H1 (cell line): ENCODE measurements at regions of chr12 and their contacts with region 1.

Region 1: DNA sequence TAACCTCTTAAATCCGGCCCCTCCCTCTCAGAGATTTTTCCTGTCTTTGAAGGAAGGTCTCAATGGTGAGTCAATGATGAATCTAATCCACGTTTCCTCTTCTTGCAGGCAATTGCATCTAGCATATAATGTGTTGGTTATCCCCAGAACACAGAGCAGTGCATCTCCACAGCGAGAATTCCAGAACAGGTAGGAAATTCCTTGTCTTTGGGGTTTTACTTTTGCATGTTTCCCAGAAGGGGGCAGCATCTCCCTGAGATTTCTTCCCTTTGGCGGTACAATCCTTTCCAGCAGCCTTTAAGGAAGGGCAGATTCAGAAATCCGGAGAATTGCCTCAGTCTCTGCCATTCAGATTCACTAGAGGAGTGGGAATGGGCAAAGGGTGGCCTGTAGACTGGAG is 128.0 kb downstream of the KCNA5 start:
- DNase-seq: peak; percentile 23 to 61
- H3K4me3 ChIP-seq: no peak overlapping the region
- H3K27ac ChIP-seq: no peak overlapping the region
- H3K4me1 ChIP-seq: peaks cover 0 to 4% (median 0%) of the 10 kb centered on the region in 4 experiments; a peak in 3 of 7 replicates
- H3K27me3 ChIP-seq: 0 out of 7 replicates have a peak, but pooled peaks cover 0 to 2% (median 0%) of the 10 kb centered on the region in 4 experiments
- CTCF ChIP-seq: peak in 2 of 3 experiments; percentile 74 to 83; a peak in 3 of 4 replicates
- EP300 ChIP-seq: no peak
- POLR2A ChIP-seq: no peak
- RAD21 ChIP-seq: peak; percentile 86 to 91

Region 2: DNA sequence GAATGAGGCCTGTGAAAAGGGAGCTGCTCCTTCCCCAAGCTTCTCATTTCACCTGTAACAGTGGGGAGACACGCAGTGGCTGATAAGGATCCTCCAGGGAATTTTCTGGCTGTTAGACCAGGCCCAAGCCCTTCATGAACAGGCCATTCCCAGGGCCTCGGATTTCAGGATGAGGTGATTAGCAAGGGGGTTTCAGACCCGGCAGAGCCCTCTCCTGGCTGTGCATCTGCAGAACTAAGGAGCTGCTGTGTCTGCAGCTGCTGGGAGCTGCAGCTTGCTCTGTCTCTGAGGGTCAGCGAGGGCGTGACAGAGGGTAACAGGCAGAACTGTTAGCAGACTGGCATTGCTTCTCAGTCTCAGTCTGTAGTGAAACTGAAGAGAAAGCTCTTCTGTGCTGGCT is 17.6 kb before region 1 on chr12:
- CTCF ChIA-PET with region 1: interaction called, 10 read pairs
- POLR2A ChIA-PET with region 1: no interaction called
- DNase-seq: peak; percentile 34 to 55
- H3K4me3 ChIP-seq: no peak overlapping the region
- H3K27ac ChIP-seq: no peak overlapping the region
- H3K4me1 ChIP-seq: peaks cover 0 to 4% (median 1%) of the 10 kb centered on the region in 4 experiments; a peak in 2 of 7 replicates
- H3K27me3 ChIP-seq: no peaks in the 10 kb centered on the region
- CTCF ChIP-seq: peak; percentile 13 to 52 (median 39); a peak in 3 of 4 replicates
- EP300 ChIP-seq: no peak
- POLR2A ChIP-seq: no peak
- RAD21 ChIP-seq: peak; percentile 44 to 53

Region 3: DNA sequence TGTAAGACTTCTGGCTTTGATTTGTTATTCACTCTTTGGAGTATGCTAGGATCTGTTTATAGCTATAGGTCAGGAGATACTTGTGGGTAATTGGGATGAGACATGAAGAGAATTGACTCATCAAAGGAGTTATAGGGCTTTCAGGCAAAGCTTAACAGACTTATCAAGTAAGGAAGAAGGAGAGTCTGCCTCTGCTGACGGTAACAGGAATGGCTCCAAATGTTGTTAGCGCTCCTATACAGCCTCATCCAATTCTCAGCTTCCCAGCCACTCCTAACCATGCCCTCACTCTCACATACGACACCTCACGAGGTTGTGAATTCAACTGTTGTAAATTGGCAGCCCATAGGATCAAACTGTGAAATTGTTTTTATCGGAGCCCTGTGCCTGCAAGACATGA is 12.5 kb after region 1 on chr12:
- CTCF ChIA-PET with region 1: interaction called, 28 read pairs
- POLR2A ChIA-PET with region 1: interaction called, 3 read pairs
- DNase-seq: no peak
- H3K4me3 ChIP-seq: no peak overlapping the region
- H3K27ac ChIP-seq: no peak overlapping the region
- H3K4me1 ChIP-seq: no peaks in the 10 kb centered on the region
- H3K27me3 ChIP-seq: no peaks in the 10 kb centered on the region
- CTCF ChIP-seq: peak in 1 of 3 experiments; percentile 26; a peak in 1 of 4 replicates
- EP300 ChIP-seq: no peak
- POLR2A ChIP-seq: no peak
- RAD21 ChIP-seq: peak in 1 of 2 experiments; percentile 3; a peak in 1 of 4 replicates

Region 4: DNA sequence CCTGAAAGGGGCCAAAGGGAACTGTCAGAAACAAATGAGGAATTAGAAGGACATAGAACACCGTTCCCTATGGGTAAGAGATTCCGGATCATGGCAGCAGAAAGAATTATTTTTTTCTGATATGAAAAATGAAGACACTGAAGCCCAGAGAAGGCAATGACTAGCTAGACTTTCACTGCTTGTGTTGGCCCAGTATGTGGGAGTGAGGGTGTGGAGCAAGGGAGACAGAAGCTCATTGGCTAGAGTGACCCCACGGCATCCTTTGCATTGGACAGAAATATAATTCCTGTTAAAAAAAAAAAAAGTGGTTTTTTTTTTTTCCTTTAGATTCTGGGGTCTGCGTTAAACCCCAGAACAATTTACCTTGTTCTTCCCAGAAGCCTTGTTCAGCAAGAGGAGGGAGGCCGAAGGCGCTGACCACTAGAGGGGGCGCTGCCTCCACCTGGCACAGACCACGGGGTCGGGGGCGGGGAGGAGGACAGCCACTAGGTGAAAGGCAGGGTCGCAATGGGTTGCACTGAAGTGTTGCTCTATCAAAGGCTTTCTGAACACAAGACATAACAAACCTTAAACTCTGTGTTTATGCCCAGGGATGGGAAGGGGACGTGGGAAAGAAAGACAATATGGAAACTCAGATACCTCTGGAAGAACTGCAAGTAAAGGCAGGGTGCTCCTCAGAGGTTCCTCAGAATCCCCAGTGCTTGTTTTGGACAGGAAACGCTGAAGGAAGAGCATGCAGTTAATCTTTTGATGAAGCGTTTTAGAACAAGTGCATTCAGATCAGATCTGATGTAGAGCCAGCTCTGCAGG is 28.8 kb after region 1 on chr12:
- CTCF ChIA-PET with region 1: interaction called, 16 read pairs
- POLR2A ChIA-PET with region 1: interaction called, 3 read pairs
- DNase-seq: peak; percentile 58 to 93
- H3K4me3 ChIP-seq: no peak overlapping the region
- H3K27ac ChIP-seq: no peak overlapping the region
- H3K4me1 ChIP-seq: peaks cover 3 to 22% (median 10%) of the 10 kb centered on the region in 4 experiments; a peak in 5 of 7 replicates
- H3K27me3 ChIP-seq: no peaks in the 10 kb centered on the region; a peak in 1 of 7 replicates
- CTCF ChIP-seq: peak; percentile 83 to 95 (median 89)
- EP300 ChIP-seq: no peak
- POLR2A ChIP-seq: no peak
- RAD21 ChIP-seq: peak; percentile 96

Region 5: GRCh38 chr12:5442251-5443006 is 270.7 kb after region 1 on chr12:
- CTCF ChIA-PET with region 1: interaction called, 33 read pairs
- POLR2A ChIA-PET with region 1: no interaction called
- DNase-seq: no peak
- H3K4me3 ChIP-seq: no peak overlapping the region
- H3K27ac ChIP-seq: no peak overlapping the region
- H3K4me1 ChIP-seq: peaks cover 2 to 8% (median 3%) of the 10 kb centered on the region in 4 experiments; a peak in 4 of 7 replicates
- H3K27me3 ChIP-seq: no peaks in the 10 kb centered on the region; a peak in 1 of 7 replicates
- CTCF ChIP-seq: peak; percentile 7 to 73 (median 61)
- EP300 ChIP-seq: no peak
- POLR2A ChIP-seq: no peak
- RAD21 ChIP-seq: peak; percentile 80 to 87